ENCODE measurements at regions of chr1 and their contacts with region 1.

Region 1: DNA sequence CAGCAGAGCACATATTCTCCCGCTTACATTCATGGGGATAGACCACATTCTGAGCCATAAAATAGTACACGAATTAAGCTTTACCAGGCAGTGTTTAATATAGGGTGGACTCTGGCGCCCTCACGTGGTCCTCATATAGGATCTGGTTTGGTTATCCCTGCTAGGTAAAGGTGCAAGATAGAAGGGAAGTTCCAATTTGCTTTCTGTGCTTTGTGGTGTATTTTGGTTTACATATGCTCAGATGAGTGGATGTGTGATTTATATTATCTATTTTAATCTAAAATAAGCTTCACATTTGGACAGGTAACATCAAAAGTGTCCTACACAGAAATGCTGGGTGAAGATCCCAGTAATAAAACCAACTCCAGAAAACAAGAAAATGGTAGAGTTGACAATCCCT is 3.6 kb downstream of the CR1 start:
- DNase-seq: peak; percentile 36 to 84 (median 71)
- ATAC-seq: peak; percentile 77
- H3K4me3 ChIP-seq: no peak overlapping the region
- H3K4me3 Mint-ChIP-seq: no peak overlapping the region
- H3K27ac ChIP-seq: no peak overlapping the region
- H3K27ac Mint-ChIP-seq: no peak overlapping the region
- H3K4me1 ChIP-seq: peaks cover 3% of the 10 kb centered on the region
- H3K4me1 Mint-ChIP-seq: peaks cover 23% of the 10 kb centered on the region
- H3K27me3 ChIP-seq: no peaks in the 10 kb centered on the region
- H3K27me3 Mint-ChIP-seq: peaks cover 16% of the 10 kb centered on the region
- CTCF ChIP-seq: peak; percentile 86

Region 2: DNA sequence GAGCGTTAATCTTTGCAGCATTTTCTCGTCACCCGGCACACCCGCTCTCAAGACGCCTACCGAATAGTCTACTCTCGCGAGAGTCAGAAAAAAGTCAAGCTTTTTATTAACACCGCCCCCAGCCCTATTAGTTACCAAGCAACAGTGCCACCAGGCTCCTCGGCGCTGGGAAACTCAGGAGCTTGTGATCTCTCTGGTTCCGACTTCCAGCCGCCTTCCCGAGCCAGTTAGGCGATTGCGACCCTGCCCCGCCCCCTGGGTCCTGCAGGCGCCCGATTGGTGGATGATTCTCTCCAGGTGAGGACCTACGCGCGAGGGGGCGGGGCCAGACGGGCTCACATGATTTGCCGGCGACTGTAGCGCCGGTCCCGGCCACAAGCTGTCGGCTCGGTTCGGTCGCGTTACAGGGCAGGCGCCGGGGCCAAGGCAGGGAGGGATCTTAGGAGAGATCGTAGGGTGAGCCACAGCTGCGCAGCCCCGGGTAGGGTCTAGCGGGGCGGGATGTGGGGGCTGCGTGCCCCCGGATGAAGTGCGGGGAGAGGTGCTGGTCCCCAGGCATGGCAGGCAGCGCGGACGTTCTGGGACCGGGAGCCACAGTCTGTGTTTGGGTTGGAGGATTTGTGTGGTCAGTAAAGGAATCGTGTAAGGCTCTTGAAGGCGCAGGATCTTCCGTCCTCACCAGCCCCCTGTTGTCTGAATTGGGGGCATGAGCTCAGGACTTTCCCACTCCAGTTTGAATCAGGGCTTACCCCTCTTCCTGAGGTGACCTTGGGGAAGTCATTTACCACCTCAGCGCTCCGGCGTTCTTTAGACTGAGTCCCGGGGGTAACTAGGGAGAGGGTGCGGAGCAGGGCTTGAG is 446.4 kb before region 1 on chr1 and contains the start of gene PFKFB2:
- CTCF ChIA-PET with region 1: interaction called, 4 read pairs
- POLR2A ChIA-PET with region 1: no interaction called
- intact Hi-C with region 1: loop called in 1 of 2 experiments (anchors 1 kb)
- DNase-seq: peak; percentile 88 to 97 (median 95)
- ATAC-seq: peak; percentile 87
- H3K4me3 ChIP-seq: peak within 1 kb of the TSS; percentile 70 to 82
- H3K4me3 Mint-ChIP-seq: peak within 1 kb of the TSS; percentile 97
- H3K27ac ChIP-seq: peak within 1 kb of the TSS; percentile 70 to 83
- H3K27ac Mint-ChIP-seq: peak within 1 kb of the TSS; percentile 98
- H3K4me1 ChIP-seq: peaks cover 28% of the 10 kb centered on the region
- H3K4me1 Mint-ChIP-seq: peaks cover 44% of the 10 kb centered on the region
- H3K27me3 ChIP-seq: no peaks in the 10 kb centered on the region
- H3K27me3 Mint-ChIP-seq: no peaks in the 10 kb centered on the region
- CTCF ChIP-seq: peak; percentile 21
- total RNA-seq, gene PFKFB2: 8.1 to 8.5 TPM

Region 3: GRCh38 chr1:207084701-207085180 is 414.8 kb before region 1 on chr1:
- CTCF ChIA-PET with region 1: interaction called, 41 read pairs
- POLR2A ChIA-PET with region 1: no interaction called
- intact Hi-C with region 1: loop called (anchors 1 kb)
- DNase-seq: peak in 8 of 9 experiments; percentile 29 to 82 (median 60)
- ATAC-seq: peak; percentile 79
- H3K4me3 ChIP-seq: no peak overlapping the region
- H3K4me3 Mint-ChIP-seq: no peak overlapping the region
- H3K27ac ChIP-seq: no peak overlapping the region
- H3K27ac Mint-ChIP-seq: no peak overlapping the region
- H3K4me1 ChIP-seq: peaks cover 21% of the 10 kb centered on the region
- H3K4me1 Mint-ChIP-seq: peaks cover 23% of the 10 kb centered on the region
- H3K27me3 ChIP-seq: no peaks in the 10 kb centered on the region
- H3K27me3 Mint-ChIP-seq: peaks cover 6% of the 10 kb centered on the region
- CTCF ChIP-seq: peak; percentile 67

Region 4: DNA sequence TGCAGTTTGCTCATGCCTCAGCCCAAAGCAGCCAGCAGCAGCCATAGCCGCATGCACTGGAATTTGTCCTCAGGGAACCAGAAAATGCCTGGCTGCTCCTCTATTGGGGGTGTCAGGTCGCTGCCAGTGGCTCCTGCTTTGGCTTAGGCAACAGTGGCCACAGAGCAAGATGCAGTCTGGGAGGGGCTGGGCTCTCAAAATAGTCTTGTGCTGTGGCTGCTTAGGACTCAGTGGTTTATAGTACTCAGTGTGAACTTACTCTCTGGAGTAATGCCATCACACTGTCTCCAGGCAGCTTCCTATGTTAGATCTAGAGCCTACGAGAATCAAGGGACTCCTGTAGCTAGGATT is 153.0 kb before region 1 on chr1:
- CTCF ChIA-PET with region 1: no interaction called
- POLR2A ChIA-PET with region 1: no interaction called
- intact Hi-C with region 1: loop called in 1 of 2 experiments (anchors 5 kb)
- DNase-seq: no peak
- ATAC-seq: peak; percentile 43
- H3K4me3 ChIP-seq: no peak overlapping the region
- H3K4me3 Mint-ChIP-seq: peak overlapping the region; percentile 38
- H3K27ac ChIP-seq: no peak overlapping the region
- H3K27ac Mint-ChIP-seq: peak overlapping the region; percentile 25
- H3K4me1 ChIP-seq: peaks cover 83% of the 10 kb centered on the region
- H3K4me1 Mint-ChIP-seq: peaks cover 89% of the 10 kb centered on the region
- H3K27me3 ChIP-seq: no peaks in the 10 kb centered on the region
- H3K27me3 Mint-ChIP-seq: no peaks in the 10 kb centered on the region
- CTCF ChIP-seq: no peak

Region 5: DNA sequence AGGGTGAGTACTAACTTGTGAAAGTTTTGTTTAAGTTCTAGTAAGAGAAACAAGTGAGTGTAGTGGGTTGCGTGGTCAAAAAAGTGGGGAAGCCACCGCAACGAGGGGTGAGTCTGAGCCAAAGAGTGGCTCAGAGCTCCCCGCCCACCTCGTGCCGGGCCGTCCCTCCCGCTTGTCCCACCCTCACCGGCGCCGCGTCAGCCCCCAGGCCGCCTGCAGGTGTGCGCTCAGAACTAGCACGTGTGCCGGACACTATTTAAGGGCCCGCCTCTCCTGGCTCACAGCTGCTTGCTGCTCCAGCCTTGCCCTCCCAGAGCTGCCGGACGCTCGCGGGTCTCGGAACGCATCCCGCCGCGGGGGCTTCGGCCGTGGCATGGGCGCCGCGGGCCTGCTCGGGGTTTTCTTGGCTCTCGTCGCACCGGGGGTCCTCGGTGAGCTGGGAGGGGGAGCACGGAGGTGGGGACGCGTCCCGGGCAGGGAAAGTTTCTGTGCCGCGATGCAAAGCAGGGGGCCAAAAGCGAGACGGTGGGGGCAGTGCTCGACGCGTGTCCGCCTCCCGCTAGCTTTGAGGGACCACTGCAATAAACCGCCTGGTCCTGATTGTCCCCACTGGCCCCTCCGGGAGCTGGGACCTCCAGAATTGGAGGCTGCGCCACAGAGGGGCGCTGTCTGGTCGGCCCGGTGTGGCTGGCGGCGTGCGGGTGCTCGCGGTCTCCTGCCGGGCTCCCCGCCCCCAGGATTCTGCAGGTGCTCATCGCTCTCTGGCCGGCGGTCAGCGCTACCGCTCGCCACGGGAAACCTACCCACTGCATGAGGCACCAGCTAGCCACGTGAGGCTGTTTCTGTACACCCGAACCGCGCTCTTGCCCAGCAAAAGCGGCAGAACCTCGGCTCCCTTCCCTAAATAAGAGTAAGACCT is 45.3 kb before region 1 on chr1 and contains the start of gene CR2:
- CTCF ChIA-PET with region 1: interaction called, 68 read pairs
- POLR2A ChIA-PET with region 1: interaction called, 14 read pairs
- intact Hi-C with region 1: loop called (anchors 1 kb)
- DNase-seq: peak in 8 of 9 experiments; percentile 1 to 73 (median 58)
- ATAC-seq: peak; percentile 72
- H3K4me3 ChIP-seq: peak within 1 kb of the TSS; percentile 49 to 59
- H3K4me3 Mint-ChIP-seq: peak within 1 kb of the TSS; percentile 77
- H3K27ac ChIP-seq: peak within 1 kb of the TSS in 1 of 2 experiments; percentile 7
- H3K27ac Mint-ChIP-seq: peak within 1 kb of the TSS; percentile 64
- H3K4me1 ChIP-seq: peaks cover 38% of the 10 kb centered on the region
- H3K4me1 Mint-ChIP-seq: peaks cover 14% of the 10 kb centered on the region
- H3K27me3 ChIP-seq: peaks cover 0 to 5% of the 10 kb centered on the region in 2 experiments
- H3K27me3 Mint-ChIP-seq: peaks cover 13% of the 10 kb centered on the region
- CTCF ChIP-seq: peak; percentile 60
- total RNA-seq, gene CR2: 5.2 to 5.7 TPM

Region 6: DNA sequence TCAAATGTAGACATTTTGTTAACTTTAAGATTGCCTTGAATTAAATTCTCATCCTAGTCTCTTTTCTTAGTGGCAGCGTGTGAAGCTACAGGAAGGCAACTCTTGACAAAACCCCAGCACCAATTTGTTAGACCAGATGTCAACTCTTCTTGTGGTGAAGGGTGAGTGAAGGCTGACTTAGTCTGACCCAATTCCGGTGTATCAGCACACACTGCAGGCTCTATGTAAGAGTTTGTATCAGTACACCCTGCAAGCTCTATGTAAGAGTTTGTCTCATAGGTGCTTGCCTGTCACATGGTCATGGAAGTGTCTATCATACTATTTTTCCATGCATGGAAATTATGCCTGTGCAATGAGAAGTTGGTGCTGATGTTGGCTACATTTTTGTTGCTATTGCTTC is 28.6 kb before region 1 on chr1:
- CTCF ChIA-PET with region 1: interaction called, 4 read pairs
- POLR2A ChIA-PET with region 1: no interaction called
- intact Hi-C with region 1: loop called in 1 of 2 experiments (anchors 1 kb)
- DNase-seq: peak in 3 of 9 experiments; percentile 53 to 71 (median 58)
- ATAC-seq: peak; percentile 99
- H3K4me3 ChIP-seq: no peak overlapping the region
- H3K4me3 Mint-ChIP-seq: no peak overlapping the region
- H3K27ac ChIP-seq: no peak overlapping the region
- H3K27ac Mint-ChIP-seq: peak overlapping the region; percentile 41
- H3K4me1 ChIP-seq: peaks cover 11% of the 10 kb centered on the region
- H3K4me1 Mint-ChIP-seq: peaks cover 30% of the 10 kb centered on the region
- H3K27me3 ChIP-seq: no peaks in the 10 kb centered on the region
- H3K27me3 Mint-ChIP-seq: no peaks in the 10 kb centered on the region
- CTCF ChIP-seq: no peak